ENCODE measurements at regions of chr4 and their contacts with region 1.

Region 1: DNA sequence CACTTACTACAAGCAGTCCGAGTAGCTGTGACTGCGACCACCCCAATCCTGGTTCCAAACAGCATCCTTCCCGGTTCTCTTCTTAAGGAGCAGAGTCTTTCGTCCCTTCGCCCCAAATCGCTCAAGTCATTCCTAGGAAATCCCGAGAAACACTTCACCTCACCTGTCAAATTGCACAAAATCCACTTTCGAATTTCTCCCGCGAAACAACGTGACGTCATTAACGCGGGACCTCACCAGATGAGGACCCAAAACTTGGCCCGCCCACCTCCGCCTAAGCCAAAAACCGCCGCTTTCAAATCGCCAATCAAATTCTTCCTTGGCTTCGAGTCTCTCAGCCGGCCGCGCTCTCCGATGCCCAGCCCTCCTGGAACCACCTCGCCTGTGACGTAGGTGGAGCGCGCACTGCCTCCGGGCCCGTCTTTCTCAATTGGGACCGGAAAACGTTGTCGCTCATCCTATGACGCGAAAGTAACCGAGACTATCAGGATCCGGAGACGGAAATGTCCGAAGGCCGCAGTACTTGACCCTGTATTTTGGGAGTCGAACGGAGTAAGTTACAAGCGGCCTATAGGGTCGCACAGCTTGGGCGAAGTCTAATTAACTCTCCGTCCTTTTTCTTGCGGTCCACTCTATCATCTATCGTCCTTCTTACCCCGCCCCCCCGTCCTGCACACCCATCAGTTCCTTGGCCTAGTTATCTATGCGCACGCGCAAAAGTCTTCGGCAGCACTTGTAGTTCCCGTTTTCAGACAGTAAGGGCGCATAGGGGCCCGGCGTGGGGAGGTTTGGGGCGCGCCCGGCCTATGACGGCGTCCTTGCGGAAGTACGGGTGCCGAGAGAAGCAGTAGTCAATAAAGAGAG is at the starts of genes LARP7 and ZGRF1:
- DNase-seq: peak; percentile 99
- ATAC-seq: peak; percentile 97 to 98 (median 98)
- H3K4me3 ChIP-seq: peak within 1 kb of the TSS; percentile 45 to 80 (median 68)
- H3K27ac ChIP-seq: peak within 1 kb of the TSS; percentile 92 to 98 (median 97)
- H3K4me1 ChIP-seq: peaks cover 0 to 39% (median 19%) of the 10 kb centered on the region in 12 donors
- H3K27me3 ChIP-seq: no peaks in the 10 kb centered on the region
- CTCF ChIP-seq: peak; percentile 59 to 99 (median 94)
- POLR2A ChIP-seq: no peak
- total RNA-seq, gene LARP7: 43.0 to 70.0 (median 50.3) TPM
- total RNA-seq, gene ZGRF1: 1.4 to 2.9 (median 1.6) TPM

Region 2: GRCh38 chr4:112327965-112328733 is 308.8 kb before region 1 on chr4:
- intact Hi-C with region 1: no loop called
- DNase-seq: no peak
- ATAC-seq: peak in 2 of 4 donors; percentile 37 to 43
- H3K4me3 ChIP-seq: no peak overlapping the region
- H3K27ac ChIP-seq: no peak overlapping the region
- H3K4me1 ChIP-seq: peaks cover 0 to 19% (median 0%) of the 10 kb centered on the region in 12 donors
- H3K27me3 ChIP-seq: no peaks in the 10 kb centered on the region
- CTCF ChIP-seq: peak; percentile 37 to 63 (median 50)
- POLR2A ChIP-seq: no peak

Region 3: GRCh38 chr4:112664611-112665010 is 27.7 kb after region 1 on chr4:
- intact Hi-C with region 1: no loop called
- DNase-seq: no peak
- ATAC-seq: no peak
- H3K4me3 ChIP-seq: no peak overlapping the region
- H3K27ac ChIP-seq: no peak overlapping the region
- H3K4me1 ChIP-seq: peaks cover 0 to 3% (median 0%) of the 10 kb centered on the region in 12 donors
- H3K27me3 ChIP-seq: no peaks in the 10 kb centered on the region
- CTCF ChIP-seq: no peak
- POLR2A ChIP-seq: no peak

Region 4: DNA sequence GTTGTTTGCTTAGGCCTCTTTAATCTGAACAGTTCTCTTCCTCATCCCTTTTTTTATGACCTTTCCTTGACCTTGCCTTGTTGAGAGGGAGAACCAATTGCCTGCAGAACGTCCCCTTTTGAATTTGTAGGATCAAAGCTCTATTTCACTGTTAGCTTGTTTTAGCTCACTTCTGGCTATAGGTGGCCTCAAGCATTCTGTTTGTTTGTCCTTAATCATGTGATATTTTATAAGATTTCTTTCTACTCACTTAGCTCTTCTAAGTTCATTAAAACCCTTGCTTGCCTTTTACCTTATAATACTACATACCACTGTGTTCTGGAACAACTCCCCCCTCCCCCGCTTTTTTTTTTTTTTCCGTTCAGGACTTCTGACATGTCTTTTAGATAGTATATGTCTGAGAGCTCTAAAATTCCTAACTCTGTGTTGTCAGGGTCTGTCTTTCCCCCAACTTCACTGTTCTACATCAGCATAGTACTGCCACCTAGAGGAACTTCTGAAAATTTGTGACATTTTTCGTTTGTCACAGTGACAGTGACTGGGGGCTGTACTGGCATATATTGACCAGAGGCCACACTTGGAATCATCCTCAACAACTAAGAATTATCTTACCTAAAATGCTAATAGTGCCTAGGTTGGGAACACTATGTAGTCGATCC is 128.5 kb after region 1 on chr4:
- intact Hi-C with region 1: loop called (anchors 1 to 5 kb)
- DNase-seq: no peak
- ATAC-seq: peak; percentile 39 to 56 (median 48)
- H3K4me3 ChIP-seq: no peak overlapping the region
- H3K27ac ChIP-seq: peak overlapping the region in 3 of 12 donors; percentile 31 to 50 (median 33)
- H3K4me1 ChIP-seq: peaks cover 0 to 5% (median 0%) of the 10 kb centered on the region in 12 donors
- H3K27me3 ChIP-seq: no peaks in the 10 kb centered on the region
- CTCF ChIP-seq: peak; percentile 19 to 56 (median 40)
- POLR2A ChIP-seq: no peak

Region 5: DNA sequence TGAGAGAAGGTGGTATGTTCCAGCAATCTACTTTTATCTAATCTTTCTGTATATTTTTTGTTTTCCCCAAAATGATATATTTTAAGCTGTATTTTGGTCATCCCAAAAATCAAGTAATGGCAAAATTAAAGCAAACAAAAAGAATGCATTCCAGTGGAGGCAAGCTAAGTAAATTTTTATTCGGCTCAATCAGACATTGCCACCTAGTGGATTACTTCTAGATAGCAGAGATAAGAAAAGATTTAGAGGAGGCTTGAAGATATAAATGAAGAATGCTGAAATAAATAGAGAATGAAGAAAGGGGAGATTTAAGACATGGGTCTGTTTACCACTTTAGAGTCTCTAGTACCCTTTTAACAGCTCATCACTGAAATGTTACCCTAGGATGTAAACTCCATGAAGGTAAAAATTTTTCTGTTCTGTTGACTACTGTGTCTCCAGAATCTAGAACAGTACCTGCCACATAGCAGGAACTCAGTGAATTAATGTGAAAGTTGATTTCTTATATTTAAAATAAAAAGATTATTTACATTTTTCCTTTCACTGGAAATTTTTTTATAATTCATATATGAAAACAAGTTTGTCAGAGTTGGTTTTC is 301.6 kb after region 1 on chr4:
- intact Hi-C with region 1: loop called in 9 of 10 experiments (anchors 5 to 10 kb)
- DNase-seq: no peak
- ATAC-seq: no peak
- H3K4me3 ChIP-seq: no peak overlapping the region
- H3K27ac ChIP-seq: no peak overlapping the region
- H3K4me1 ChIP-seq: peaks cover 0 to 8% (median 0%) of the 10 kb centered on the region in 12 donors
- H3K27me3 ChIP-seq: no peaks in the 10 kb centered on the region
- CTCF ChIP-seq: peak; percentile 41 to 77 (median 62)
- POLR2A ChIP-seq: no peak

Region 6: DNA sequence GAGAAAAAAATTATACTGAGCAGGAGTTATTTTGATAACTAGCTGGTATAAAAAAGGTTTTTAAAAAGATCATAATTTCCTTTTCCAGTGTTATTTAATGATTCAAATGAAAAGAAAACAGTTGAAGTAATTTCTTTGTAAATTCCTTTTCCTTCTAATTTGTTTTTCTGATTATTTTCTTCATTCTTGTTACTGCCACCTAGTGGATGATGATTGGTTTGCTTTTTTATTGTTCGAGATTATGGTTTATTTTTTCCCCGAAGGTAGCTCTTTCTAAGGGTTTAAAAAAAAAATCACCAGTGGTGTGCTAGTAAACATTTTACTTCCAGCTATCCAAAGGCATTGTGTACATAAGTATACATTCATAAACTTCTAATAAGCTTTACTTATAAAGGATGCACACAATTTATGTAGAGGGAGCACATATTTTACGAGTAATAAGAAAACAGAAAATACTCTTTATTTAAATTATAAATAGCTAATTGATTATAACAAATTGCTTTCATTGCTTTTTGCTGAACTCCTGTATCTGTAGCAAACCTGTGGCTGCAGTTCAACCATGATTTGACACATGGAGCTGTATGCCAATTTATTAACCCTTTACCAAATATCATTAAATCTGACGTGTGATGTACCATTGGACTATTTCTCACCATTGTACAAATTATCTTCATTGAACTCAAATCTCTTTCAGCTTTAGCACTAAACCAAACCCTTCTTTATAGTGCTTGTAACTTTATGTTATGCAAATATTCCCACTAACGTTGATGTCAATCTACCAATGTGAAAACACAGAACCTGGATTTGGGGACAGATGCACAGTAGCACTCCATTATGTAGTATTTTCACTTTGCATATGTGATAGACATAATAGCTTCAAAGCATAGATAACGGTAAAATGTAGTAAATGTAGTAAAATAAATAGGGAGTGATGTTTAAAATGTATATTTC is 314.7 kb after region 1 on chr4:
- intact Hi-C with region 1: loop called in 2 of 10 experiments (anchors 5 kb)
- DNase-seq: no peak
- ATAC-seq: no peak
- H3K4me3 ChIP-seq: peak overlapping the region in 2 of 12 donors; percentile 6 to 13
- H3K27ac ChIP-seq: no peak overlapping the region
- H3K4me1 ChIP-seq: peaks cover 0 to 7% (median 0%) of the 10 kb centered on the region in 12 donors
- H3K27me3 ChIP-seq: no peaks in the 10 kb centered on the region
- CTCF ChIP-seq: peak; percentile 38 to 65 (median 60)
- POLR2A ChIP-seq: no peak

Region 7: DNA sequence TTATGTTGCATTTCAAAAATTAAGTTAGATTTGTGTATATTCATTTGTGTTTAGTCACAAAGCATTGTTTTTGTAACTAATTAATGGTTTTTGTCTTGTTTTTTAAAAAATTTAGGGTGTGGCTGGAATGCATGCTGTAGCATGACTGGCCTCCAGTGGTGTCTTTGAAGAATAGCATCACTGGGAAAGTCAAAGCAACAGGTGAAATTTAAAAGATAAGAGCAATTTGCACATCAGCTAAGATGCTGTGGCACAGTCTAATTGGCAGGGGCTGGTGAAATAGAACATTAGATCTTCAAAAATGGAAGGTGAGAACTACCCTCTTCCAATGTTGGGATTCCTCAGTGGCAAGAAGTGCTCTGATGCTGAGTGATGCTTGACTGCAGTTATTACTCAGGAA is 457.9 kb after region 1 on chr4:
- intact Hi-C with region 1: loop called in 3 of 10 experiments (anchors 5 to 10 kb)
- DNase-seq: no peak
- ATAC-seq: no peak
- H3K4me3 ChIP-seq: no peak overlapping the region
- H3K27ac ChIP-seq: no peak overlapping the region
- H3K4me1 ChIP-seq: no peaks in the 10 kb centered on the region
- H3K27me3 ChIP-seq: no peaks in the 10 kb centered on the region
- CTCF ChIP-seq: peak; percentile 34 to 68 (median 55)
- POLR2A ChIP-seq: no peak

Measured in heart left ventricle (tissue), 16 donors.